Activated T-helper 1 cell treated with anti-CD3 and anti-CD28 coated beads, Interleukin-12 subunit alpha, Interleukin-12 subunit beta, Interleukin-2, Interleukin-4 antibody, amounts not matched to agents 30 ng/mL and 10 ng/mL and 1 ng/mL, durations not matched to agents 14 hours and 24 hours and 36 hours (primary cell): ENCODE measurements at regions of chr16 and their contacts with region 1.

Region 1: DNA sequence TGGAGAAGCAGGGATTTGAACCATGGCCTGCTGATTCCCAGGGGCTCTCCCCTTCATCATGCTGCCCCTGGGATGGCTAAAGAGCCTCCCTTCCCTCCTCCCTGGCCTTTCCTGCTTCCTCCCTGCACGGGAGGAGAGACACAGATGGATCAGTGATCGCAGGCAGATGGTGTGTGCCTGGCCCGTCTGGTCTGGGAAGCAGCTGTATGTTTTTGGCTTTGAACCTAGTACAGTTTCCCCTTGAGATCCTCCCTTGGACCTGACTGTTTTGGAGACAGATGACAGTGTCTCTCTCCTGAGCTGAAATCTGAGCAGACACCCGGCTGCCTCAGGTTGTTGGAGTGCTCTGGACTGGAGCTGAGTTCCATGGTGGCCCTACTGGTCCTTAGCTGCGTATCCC is 29.0 kb upstream of the ATP2C2 start:
- DNase-seq: no peak
- H3K4me3 Mint-ChIP-seq: no peak overlapping the region
- H3K27ac Mint-ChIP-seq: no peak overlapping the region
- H3K4me1 Mint-ChIP-seq: no peaks in the 10 kb centered on the region
- H3K27me3 Mint-ChIP-seq: peaks cover 5% of the 10 kb centered on the region

Region 2: DNA sequence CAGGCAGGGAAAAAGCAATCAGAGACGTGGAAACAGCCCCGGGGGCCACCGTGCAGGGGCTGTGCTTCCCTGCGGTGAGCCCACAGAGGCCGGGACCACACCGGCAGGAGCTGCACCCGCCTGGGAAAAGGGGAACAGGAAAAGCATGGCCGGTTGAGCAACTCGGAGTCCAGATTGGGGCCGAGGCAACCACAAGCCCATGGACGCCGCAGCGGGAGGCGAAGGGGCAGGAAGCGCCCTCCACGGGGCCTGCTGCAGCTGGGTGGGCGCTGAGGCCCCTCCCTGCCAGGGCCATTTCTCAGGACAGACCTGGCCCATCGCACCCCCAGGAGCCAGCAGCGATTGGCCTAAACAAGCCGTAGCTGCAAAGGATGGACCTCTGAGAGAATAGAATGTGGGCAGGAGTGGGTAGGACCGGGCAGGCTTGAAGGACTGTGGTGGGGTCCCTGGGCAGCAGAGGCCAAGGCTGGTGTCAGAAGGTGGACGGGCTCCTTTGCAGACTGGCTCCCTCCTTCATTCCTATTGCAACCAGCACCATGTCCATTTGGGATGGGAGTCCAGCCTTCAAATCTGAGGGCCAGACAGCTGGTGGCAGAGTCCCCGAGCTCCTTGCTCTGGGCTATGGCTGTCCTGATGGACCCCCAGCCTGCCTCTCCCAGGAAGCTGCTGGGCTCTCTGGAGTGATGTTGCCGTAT is 1490.6 kb after region 1 on chr16:
- intact Hi-C with region 1: loop called (anchors 5 kb)
- DNase-seq: no peak
- H3K4me3 Mint-ChIP-seq: no peak overlapping the region
- H3K27ac Mint-ChIP-seq: no peak overlapping the region
- H3K4me1 Mint-ChIP-seq: peaks cover 7% of the 10 kb centered on the region
- H3K27me3 Mint-ChIP-seq: peaks cover 24% of the 10 kb centered on the region